ENCODE measurements at regions of chr21 and their contacts with region 1.

Region 1: GRCh38 chr21:43718872-43719747 is at the start of gene PDXK:
- DNase-seq: peak; percentile 95
- H3K4me3 ChIP-seq: peak within 1 kb of the TSS; percentile 84 to 95 (median 88)
- H3K27ac ChIP-seq: peak within 1 kb of the TSS; percentile 81 to 88 (median 84)
- H3K4me1 ChIP-seq: peaks cover 28 to 38% (median 36%) of the 10 kb centered on the region in 4 donors
- H3K27me3 ChIP-seq: peaks cover 0 to 4% (median 0%) of the 10 kb centered on the region in 4 donors
- CTCF ChIP-seq: peak in 1 of 3 experiments; percentile 16
- EP300 ChIP-seq: no peak
- POLR2A ChIP-seq: peak; percentile 87
- total RNA-seq, gene PDXK: 22.4 to 40.9 (median 31.8) TPM

Region 2: GRCh38 chr21:43664358-43664757 is 54.8 kb before region 1 on chr21:
- intact Hi-C with region 1: loop called (anchors 5 kb)
- DNase-seq: no peak
- H3K4me3 ChIP-seq: no peak overlapping the region
- H3K27ac ChIP-seq: no peak overlapping the region
- H3K4me1 ChIP-seq: peaks cover 11 to 28% (median 20%) of the 10 kb centered on the region in 4 donors
- H3K27me3 ChIP-seq: no peaks in the 10 kb centered on the region
- CTCF ChIP-seq: no peak
- EP300 ChIP-seq: no peak
- POLR2A ChIP-seq: no peak

Region 3: DNA sequence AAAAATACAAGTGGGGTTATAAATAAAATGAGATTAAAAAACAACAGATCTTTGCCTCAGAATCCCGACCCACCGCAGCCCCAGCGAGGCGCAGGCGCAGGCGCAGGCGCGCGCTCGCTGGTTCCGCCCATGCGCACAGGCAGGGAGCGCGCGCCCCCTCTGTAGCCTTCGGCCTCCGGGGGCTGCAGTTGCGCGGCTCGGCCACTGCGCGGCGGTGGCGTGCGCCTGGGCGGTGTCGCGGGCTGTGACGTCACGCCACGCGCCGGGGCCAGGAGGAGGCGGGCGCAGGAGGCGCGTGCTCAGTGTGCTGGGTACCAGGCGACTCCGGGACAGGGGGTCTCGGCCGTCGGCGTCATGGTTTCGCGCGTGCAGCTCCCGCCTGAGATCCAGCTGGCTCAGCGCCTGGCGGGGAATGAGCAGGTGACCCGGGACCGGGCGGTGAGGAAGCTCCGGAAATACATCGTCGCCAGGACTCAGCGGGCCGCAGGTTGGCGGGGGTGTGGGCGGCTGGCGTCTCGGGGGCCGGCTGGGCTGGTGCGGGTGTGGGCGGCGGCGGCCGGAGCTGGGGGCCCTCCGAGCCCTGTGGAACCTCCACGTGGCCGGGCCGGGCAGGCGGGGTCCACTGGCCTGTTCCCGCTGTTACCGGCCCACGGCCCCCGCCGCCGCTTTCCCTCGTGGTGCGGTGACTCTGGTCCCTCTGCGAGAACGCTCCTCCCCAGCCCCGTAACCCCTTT is 70.3 kb after region 1 on chr21 and contains the start of gene RRP1:
- intact Hi-C with region 1: loop called (anchors 5 kb)
- DNase-seq: peak; percentile 96
- H3K4me3 ChIP-seq: peak within 1 kb of the TSS; percentile 86 to 96 (median 95)
- H3K27ac ChIP-seq: peak within 1 kb of the TSS; percentile 85 to 90 (median 87)
- H3K4me1 ChIP-seq: peaks cover 12 to 26% (median 23%) of the 10 kb centered on the region in 4 donors
- H3K27me3 ChIP-seq: no peaks in the 10 kb centered on the region
- CTCF ChIP-seq: peak in 2 of 3 experiments; percentile 100
- EP300 ChIP-seq: no peak
- POLR2A ChIP-seq: no peak
- total RNA-seq, gene RRP1: 9.1 to 18.9 (median 16.3) TPM

Region 4: GRCh38 chr21:44083631-44084291 is 364.7 kb after region 1 on chr21:
- intact Hi-C with region 1: no loop called
- DNase-seq: no peak
- H3K4me3 ChIP-seq: no peak overlapping the region
- H3K27ac ChIP-seq: peak overlapping the region in 3 of 4 donors; percentile 11 to 34 (median 18)
- H3K4me1 ChIP-seq: peaks cover 12 to 48% (median 25%) of the 10 kb centered on the region in 4 donors
- H3K27me3 ChIP-seq: no peaks in the 10 kb centered on the region
- CTCF ChIP-seq: no peak
- EP300 ChIP-seq: no peak
- POLR2A ChIP-seq: no peak